Activated naive CD4-positive, alpha-beta T cell treated with anti-CD3 and anti-CD28 coated beads for 36 hours (primary cell): ENCODE measurements at regions of chr5 and their contacts with region 1.

Region 1: DNA sequence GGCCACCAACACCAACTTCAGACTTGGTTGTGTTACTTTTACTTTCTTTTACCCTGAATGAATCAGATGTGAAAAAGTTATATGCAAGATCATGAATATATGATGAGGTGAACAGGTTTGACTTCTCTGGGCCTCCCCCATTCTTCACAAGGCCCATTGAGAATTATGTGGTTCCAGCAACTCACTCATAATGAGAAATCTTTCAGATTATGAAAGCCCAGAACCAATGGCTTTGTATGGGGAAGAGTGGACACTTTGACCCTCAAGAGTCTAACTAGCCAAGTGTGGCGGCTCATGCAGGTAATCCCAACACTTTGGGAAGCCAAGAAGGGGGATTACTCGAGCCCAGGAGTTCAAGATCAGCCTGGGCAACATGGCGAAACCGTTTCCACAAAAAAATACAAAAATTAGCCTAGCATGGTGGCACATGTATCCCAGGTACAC is 16.1 kb upstream of the LNPEP start:
- DNase-seq: peak; percentile 67
- H3K4me3 Mint-ChIP-seq: no peak overlapping the region
- H3K27ac Mint-ChIP-seq: peak overlapping the region; percentile 56
- H3K4me1 Mint-ChIP-seq: peaks cover 59% of the 10 kb centered on the region
- H3K27me3 Mint-ChIP-seq: no peaks in the 10 kb centered on the region

Region 2: GRCh38 chr5:95817440-95817839 is 1102.3 kb before region 1 on chr5:
- CTCF ChIA-PET with region 1: no interaction called
- intact Hi-C with region 1: no loop called
- DNase-seq: peak; percentile 61
- H3K4me3 Mint-ChIP-seq: peak overlapping the region; percentile 77
- H3K27ac Mint-ChIP-seq: peak overlapping the region; percentile 91
- H3K4me1 Mint-ChIP-seq: peaks cover 69% of the 10 kb centered on the region
- H3K27me3 Mint-ChIP-seq: no peaks in the 10 kb centered on the region

Region 3: DNA sequence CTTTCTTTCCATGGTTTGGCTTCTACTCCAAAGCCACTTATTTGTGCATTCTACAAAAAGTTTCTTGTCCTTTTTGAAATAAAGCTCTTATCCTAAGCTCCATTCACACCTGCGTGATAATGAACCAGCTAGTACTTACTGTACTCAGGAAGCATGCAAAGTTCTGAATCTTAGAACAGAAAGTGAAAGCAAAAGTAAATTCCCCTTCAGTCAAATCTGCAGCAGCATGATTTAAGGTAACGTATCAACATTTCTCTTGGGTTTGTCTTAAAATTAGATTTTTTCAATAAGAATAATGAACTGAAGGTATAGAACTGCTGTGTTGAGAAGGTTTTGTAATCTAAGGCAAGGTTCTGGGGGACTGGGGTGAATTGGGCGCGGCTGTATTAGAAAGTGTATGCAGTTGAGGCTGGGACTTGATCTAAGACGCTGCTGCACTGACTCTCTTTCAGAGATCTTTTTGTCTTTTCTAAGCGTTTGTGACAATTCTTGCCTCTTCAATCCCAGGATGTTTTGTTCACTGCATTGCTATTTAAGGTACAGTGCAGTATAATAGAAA is 43.4 kb before region 1 on chr5 and contains the start of gene ERAP2:
- CTCF ChIA-PET with region 1: no interaction called
- intact Hi-C with region 1: loop called (anchors 1 kb)
- DNase-seq: no peak
- H3K4me3 Mint-ChIP-seq: peak within 1 kb of the TSS; percentile 90
- H3K27ac Mint-ChIP-seq: peak within 1 kb of the TSS; percentile 95
- H3K4me1 Mint-ChIP-seq: peaks cover 68% of the 10 kb centered on the region
- H3K27me3 Mint-ChIP-seq: no peaks in the 10 kb centered on the region
- total RNA-seq, gene ERAP2: 108 to 111 TPM

Region 4: DNA sequence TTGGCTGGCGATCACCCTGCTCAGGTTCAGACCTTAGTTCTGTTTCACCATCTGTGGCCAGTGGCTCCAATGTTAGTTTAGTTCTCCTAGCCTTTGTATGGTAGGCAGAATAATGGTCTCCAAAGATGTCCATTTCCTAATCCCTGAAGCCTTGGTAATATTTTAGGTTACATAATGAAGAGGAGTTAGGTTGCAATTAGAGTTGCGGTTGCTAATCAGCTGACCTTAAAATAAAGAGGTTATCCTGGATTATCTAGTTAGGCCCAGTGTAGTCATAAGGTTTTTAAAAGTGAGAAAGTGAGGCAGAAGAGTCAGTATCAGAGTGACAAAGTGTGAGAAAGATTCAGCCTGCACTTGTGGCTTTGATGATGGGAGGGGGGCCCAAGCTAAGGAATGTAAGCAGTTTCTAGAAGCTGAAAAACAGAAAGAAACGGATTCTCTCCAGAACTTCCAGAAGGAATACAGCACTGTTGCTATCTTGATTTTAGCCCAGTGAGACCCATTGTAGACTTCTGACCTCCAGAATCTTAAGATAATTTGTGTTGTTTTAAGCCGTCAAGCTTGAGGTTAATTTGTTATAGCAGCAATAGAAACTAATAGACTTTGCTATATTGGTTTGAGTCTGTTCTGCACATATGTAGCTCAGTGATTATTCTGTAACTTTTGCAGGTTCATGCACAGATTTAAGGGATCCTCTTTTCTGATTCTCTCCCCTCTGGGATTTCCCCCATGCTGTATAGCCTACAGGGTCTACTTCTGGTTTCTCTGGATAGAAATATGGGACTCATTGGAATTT is 37.7 kb after region 1 on chr5:
- CTCF ChIA-PET with region 1: no interaction called
- intact Hi-C with region 1: loop called (anchors 1 kb)
- DNase-seq: peak; percentile 73
- H3K4me3 Mint-ChIP-seq: peak overlapping the region; percentile 64
- H3K27ac Mint-ChIP-seq: peak overlapping the region; percentile 86
- H3K4me1 Mint-ChIP-seq: peaks cover 77% of the 10 kb centered on the region
- H3K27me3 Mint-ChIP-seq: no peaks in the 10 kb centered on the region

Region 5: GRCh38 chr5:97094579-97095317 is 175.0 kb after region 1 on chr5:
- CTCF ChIA-PET with region 1: no interaction called
- intact Hi-C with region 1: loop called (anchors 5 kb)
- DNase-seq: peak; percentile 68
- H3K4me3 Mint-ChIP-seq: no peak overlapping the region
- H3K27ac Mint-ChIP-seq: no peak overlapping the region
- H3K4me1 Mint-ChIP-seq: peaks cover 16% of the 10 kb centered on the region
- H3K27me3 Mint-ChIP-seq: peaks cover 6% of the 10 kb centered on the region